ENCODE measurements at regions of chr6 and their contacts with region 1.

Region 1: GRCh38 chr6:29649701-29650673 is 6.9 kb upstream of the MOG start:
- DNase-seq: peak; percentile 94 to 95
- ATAC-seq: peak; percentile 93 to 94
- H3K4me3 ChIP-seq: peak overlapping the region; percentile 48
- H3K27ac ChIP-seq: peak overlapping the region; percentile 71 to 87
- H3K4me1 ChIP-seq: no peaks in the 10 kb centered on the region
- CTCF ChIP-seq: peak; percentile 64
- EP300 ChIP-seq: no peak
- POLR2A ChIP-seq: peak; percentile 57
- RAD21 ChIP-seq: no peak

Region 2: DNA sequence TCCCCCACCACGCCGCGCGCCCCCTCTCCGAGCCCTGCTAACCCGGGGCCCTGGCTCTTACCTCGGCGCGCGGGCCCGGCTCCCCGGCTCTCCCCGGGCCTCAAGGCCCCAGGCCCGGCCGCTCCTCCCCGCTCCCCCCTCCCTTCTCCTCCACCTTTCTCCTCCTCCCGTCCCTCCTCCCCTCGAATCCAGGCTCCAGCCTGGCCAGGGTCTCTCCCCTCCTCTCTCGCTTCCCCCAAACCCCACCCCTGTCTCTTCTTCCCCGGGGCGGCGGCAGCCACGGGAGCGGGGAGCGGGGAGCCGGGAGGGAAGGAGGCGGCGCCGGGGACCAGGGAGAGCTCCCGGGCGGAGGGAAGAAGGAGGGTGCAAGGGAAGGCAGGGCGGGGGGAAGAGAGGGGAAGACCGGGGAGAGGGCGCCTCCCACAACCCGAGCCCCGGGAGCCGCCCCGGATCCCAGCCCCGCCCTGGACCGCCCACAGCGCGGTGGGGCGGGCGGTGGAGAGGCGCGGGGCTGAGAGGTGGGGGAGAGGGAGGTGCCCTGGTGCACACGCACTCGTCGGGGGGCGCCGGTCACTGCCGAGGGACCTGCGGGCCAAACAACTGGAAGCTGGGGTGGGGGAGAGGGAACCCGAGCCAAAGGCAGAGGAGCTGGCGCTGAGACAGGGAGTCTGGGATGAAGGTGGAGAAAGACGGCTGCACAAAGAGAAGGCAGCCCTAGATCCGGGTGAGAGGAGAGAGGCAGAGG is 17.0 kb before region 1 on chr6 and contains the start of gene GABBR1:
- CTCF ChIA-PET with region 1: interaction called, 183 read pairs
- POLR2A ChIA-PET with region 1: interaction called, 13 read pairs
- DNase-seq: peak; percentile 74 to 86
- ATAC-seq: peak; percentile 87 to 91
- H3K4me3 ChIP-seq: peak within 1 kb of the TSS; percentile 54
- H3K27ac ChIP-seq: peak within 1 kb of the TSS; percentile 87 to 98
- H3K4me1 ChIP-seq: peaks cover 14% of the 10 kb centered on the region
- CTCF ChIP-seq: no peak
- EP300 ChIP-seq: no peak
- POLR2A ChIP-seq: peak; percentile 54
- RAD21 ChIP-seq: no peak
- polyA plus RNA-seq, gene GABBR1: 6.8 and 11.0 TPM in 2 replicates

Region 3: GRCh38 chr6:29661071-29661470 is 11.1 kb after region 1 on chr6:
- CTCF ChIA-PET with region 1: interaction called, 183 read pairs
- POLR2A ChIA-PET with region 1: interaction called, 3 read pairs
- DNase-seq: no peak
- ATAC-seq: no peak
- H3K4me3 ChIP-seq: no peak overlapping the region
- H3K27ac ChIP-seq: no peak overlapping the region
- H3K4me1 ChIP-seq: no peaks in the 10 kb centered on the region
- CTCF ChIP-seq: no peak
- EP300 ChIP-seq: no peak
- POLR2A ChIP-seq: no peak
- RAD21 ChIP-seq: no peak

Region 4: GRCh38 chr6:29665942-29666825 is 16.2 kb after region 1 on chr6:
- CTCF ChIA-PET with region 1: interaction called, 69 read pairs
- POLR2A ChIA-PET with region 1: interaction called, 3 read pairs
- DNase-seq: no peak
- ATAC-seq: no peak
- H3K4me3 ChIP-seq: no peak overlapping the region
- H3K27ac ChIP-seq: no peak overlapping the region
- H3K4me1 ChIP-seq: no peaks in the 10 kb centered on the region
- CTCF ChIP-seq: no peak
- EP300 ChIP-seq: no peak
- POLR2A ChIP-seq: no peak
- RAD21 ChIP-seq: no peak

Region 5: DNA sequence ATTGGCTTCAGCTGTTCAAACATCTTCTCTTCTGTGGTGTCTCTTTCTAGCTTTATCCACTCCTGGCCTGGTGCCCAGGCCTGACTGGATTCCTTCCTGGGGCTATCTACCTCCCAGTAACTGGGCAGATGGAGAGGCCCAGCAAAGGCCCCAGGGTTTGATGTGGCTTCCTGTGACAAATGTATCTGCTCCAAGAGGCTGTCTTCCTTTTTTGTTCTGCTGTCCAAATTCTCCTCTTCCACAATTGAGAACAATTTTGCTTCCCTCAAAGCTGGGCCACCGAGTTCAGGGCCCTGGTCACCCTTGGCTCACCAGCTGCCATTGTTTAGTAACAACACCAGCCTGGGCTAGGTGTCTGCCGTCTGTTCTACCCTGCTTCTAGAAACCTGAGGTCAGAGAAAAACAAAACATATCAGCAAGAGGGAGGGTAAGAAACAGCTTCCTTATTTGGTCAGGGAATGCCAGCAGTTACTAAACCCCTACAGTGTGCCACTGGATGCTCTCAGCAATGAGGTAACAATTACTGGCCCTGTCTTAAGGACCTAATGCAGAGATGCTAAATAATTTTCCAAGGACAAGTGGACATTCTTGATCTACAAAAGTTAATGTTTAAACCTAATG is 27.1 kb after region 1 on chr6:
- CTCF ChIA-PET with region 1: interaction called, 16 read pairs
- POLR2A ChIA-PET with region 1: no interaction called
- DNase-seq: peak in 1 of 2 experiments; percentile 29
- ATAC-seq: peak in 1 of 2 experiments; percentile 34; a peak in 2 of 6 replicates
- H3K4me3 ChIP-seq: no peak overlapping the region
- H3K27ac ChIP-seq: 0 out of 6 replicates have a peak overlapping the region, but pooled peaks of 1 of the 2 experiments have one; percentile 13
- H3K4me1 ChIP-seq: peaks cover 14% of the 10 kb centered on the region; the same call in 1 of the 3 replicates
- CTCF ChIP-seq: no peak
- EP300 ChIP-seq: no peak
- POLR2A ChIP-seq: no peak
- RAD21 ChIP-seq: no peak

Region 6: GRCh38 chr6:29685718-29686326 is 35.8 kb after region 1 on chr6:
- CTCF ChIA-PET with region 1: interaction called, 11 read pairs
- POLR2A ChIA-PET with region 1: no interaction called
- DNase-seq: no peak
- ATAC-seq: no peak
- H3K4me3 ChIP-seq: no peak overlapping the region
- H3K27ac ChIP-seq: no peak overlapping the region
- H3K4me1 ChIP-seq: no peaks in the 10 kb centered on the region
- CTCF ChIP-seq: no peak
- EP300 ChIP-seq: no peak
- POLR2A ChIP-seq: no peak
- RAD21 ChIP-seq: peak in 1 of 2 experiments; percentile 15; a peak in 1 of 5 replicates

Region 7: GRCh38 chr6:29696155-29697125 is 46.5 kb after region 1 on chr6:
- CTCF ChIA-PET with region 1: interaction called, 15 read pairs
- POLR2A ChIA-PET with region 1: interaction called, 6 read pairs
- DNase-seq: peak; percentile 18 to 20
- ATAC-seq: peak; percentile 47 to 78; a peak in 4 of 6 replicates
- H3K4me3 ChIP-seq: no peak overlapping the region
- H3K27ac ChIP-seq: no peak overlapping the region
- H3K4me1 ChIP-seq: no peaks in the 10 kb centered on the region
- CTCF ChIP-seq: peak; percentile 35; the same call in 2 of the 3 replicates
- EP300 ChIP-seq: no peak
- POLR2A ChIP-seq: no peak
- RAD21 ChIP-seq: no peak